Endothelial cell of umbilical vein (primary cell): ENCODE measurements at regions of chr1 and their contacts with region 1.

Region 1: GRCh38 chr1:23403735-23404486 is 20.6 kb downstream of the TCEA3 start:
- DNase-seq: peak; percentile 80
- H3K4me3 ChIP-seq: no peak overlapping the region
- H3K27ac ChIP-seq: peak overlapping the region; percentile 39
- H3K4me1 ChIP-seq: peaks cover 30% of the 10 kb centered on the region
- H3K27me3 ChIP-seq: no peaks in the 10 kb centered on the region
- CTCF ChIP-seq: peak; percentile 91 to 97
- POLR2A ChIP-seq: no peak

Region 2: DNA sequence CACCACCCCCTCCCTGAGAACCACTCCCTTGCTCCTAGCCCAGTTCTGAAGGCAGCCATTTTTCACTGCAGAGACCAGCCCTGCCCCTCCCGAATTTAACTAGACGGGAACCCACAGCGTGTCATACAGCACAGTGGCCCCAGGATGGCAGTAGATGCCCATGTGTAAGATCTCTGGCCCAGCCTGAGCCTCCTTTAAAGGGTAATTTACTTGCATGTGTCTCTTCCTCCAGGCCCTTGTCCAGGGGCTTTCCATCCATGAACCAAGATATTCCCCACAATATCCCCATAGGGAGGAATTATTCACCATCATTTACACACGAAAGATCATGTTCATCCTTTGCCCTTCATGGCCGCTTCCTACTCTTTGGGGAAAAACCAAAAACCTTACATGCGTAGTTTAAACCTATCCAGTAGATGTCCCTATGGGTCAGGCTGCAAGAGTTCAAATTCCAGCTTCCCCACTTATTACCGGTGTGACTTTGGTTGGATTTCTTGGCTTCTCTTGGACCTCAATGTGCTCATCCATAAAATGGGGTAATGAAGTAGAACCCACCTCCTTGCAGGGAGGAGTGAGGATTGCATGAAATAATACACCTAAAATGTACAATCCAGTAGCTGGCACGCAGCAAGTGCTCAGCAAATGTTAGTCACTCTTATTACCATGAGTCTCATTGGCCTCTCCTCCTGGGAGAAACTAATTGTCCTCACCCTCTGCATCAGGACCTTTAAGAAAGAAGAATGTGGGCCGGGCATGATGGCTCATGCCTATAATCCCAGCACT is 427.3 kb before region 1 on chr1:
- CTCF ChIA-PET with region 1: interaction called, 6 read pairs
- POLR2A ChIA-PET with region 1: no interaction called
- dilution Hi-C with region 1: no loop called
- intact Hi-C with region 1: loop called (anchors 1 kb)
- DNase-seq: peak; percentile 83
- H3K4me3 ChIP-seq: no peak overlapping the region
- H3K27ac ChIP-seq: no peak overlapping the region
- H3K4me1 ChIP-seq: peaks cover 12% of the 10 kb centered on the region
- H3K27me3 ChIP-seq: no peaks in the 10 kb centered on the region
- CTCF ChIP-seq: peak; percentile 81 to 87
- POLR2A ChIP-seq: no peak

Region 3: DNA sequence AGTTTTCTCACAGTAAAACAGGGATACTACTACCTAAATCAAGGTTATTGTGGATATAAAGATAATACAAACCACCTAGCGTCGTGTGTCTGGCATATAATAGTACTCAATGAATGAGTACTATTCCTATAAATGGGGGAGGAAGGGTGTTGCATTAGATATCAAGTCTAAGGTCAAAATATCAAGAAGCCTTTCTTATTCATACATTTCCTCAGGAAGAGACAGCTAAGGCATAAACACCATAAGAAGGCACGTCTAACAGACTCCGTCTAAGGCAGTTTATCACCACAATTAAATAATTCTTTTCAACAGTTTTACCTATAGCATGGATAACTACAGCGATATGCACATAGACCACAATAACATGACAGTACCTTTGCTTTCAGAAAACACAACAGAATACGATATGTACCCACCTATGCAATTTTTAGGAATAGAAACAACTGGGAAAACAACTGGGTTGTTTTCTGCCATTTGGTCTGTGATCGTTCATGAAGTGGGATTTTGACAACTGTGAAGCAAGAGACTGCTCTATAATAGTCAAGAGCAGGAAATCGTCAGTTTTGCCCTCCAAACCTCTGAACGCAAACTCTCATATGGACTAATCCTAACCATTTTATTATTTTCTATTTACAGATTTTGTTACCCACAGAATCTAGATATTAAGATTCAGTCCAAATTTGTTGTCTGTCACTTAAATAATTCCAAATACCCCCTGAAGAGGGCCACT is 112.9 kb before region 1 on chr1:
- CTCF ChIA-PET with region 1: interaction called, 5 read pairs
- POLR2A ChIA-PET with region 1: no interaction called
- dilution Hi-C with region 1: no loop called
- intact Hi-C with region 1: loop called (anchors 1 kb)
- DNase-seq: peak; percentile 89
- H3K4me3 ChIP-seq: peak overlapping the region in 1 of 3 experiments; percentile 4
- H3K27ac ChIP-seq: peak overlapping the region; percentile 92
- H3K4me1 ChIP-seq: peaks cover 55% of the 10 kb centered on the region
- H3K27me3 ChIP-seq: no peaks in the 10 kb centered on the region
- CTCF ChIP-seq: no peak
- POLR2A ChIP-seq: peak; percentile 69

Region 4: DNA sequence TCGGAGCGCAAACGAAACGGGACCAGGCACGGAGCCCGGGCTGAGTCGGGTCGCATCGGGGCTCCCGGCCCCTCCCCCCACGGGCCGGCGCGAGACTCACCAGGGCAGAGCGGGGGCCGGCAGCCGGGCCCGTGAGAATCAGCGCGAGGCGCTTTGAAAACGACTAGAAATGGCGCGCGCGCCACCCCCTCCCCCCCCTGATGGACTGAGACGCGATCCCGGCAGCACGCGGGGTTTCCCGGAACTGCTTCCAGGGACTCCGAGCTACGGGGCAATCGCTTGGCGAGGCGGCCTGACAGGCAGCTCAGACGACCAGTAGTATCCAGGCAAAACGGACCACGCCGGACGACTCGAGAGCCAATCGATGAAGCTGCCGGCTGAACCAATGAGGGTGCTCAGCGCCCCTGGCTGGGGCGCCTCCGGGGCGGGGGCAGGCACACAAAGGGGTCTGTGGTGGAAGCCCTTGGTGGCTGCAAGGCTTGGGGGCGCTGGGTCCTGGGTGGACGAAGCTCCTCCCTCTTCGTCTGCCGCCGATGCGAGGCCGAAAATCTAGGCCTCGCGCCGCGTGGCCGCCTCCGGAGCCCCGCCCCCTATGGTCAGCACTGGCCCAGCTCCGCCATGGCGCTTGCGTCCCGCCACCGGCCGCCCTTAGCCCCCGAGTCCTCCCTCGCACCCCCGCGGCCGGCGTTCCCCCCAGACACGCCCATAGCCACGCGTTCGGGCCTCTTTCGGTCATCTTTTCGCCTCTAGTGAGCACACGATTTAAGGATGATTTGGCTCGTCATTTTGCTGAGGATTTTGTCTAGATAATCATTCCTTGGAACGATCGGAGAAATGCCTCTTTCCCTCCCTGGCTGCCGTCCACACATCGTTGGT is 59.6 kb before region 1 on chr1 and contains the start of gene HNRNPR:
- CTCF ChIA-PET with region 1: interaction called, 33 read pairs
- POLR2A ChIA-PET with region 1: interaction called, 5 read pairs
- dilution Hi-C with region 1: no loop called
- intact Hi-C with region 1: loop called (anchors 1 kb)
- DNase-seq: peak; percentile 100
- H3K4me3 ChIP-seq: peak within 1 kb of the TSS; percentile 73 to 99 (median 99)
- H3K27ac ChIP-seq: peak within 1 kb of the TSS; percentile 79
- H3K4me1 ChIP-seq: peaks cover 27% of the 10 kb centered on the region
- H3K27me3 ChIP-seq: no peaks in the 10 kb centered on the region
- CTCF ChIP-seq: no peak
- POLR2A ChIP-seq: peak; percentile 87
- total RNA-seq, gene HNRNPR: 165 and 171 TPM in 2 replicates

Region 5: GRCh38 chr1:23367791-23368561 is 35.9 kb before region 1 on chr1:
- CTCF ChIA-PET with region 1: interaction called, 30 read pairs
- POLR2A ChIA-PET with region 1: no interaction called
- dilution Hi-C with region 1: no loop called
- intact Hi-C with region 1: loop called (anchors 1 kb)
- DNase-seq: peak; percentile 99
- H3K4me3 ChIP-seq: peak overlapping the region; percentile 47 to 93 (median 70)
- H3K27ac ChIP-seq: peak overlapping the region; percentile 82
- H3K4me1 ChIP-seq: peaks cover 32% of the 10 kb centered on the region
- H3K27me3 ChIP-seq: no peaks in the 10 kb centered on the region
- CTCF ChIP-seq: no peak
- POLR2A ChIP-seq: no peak

Region 6: DNA sequence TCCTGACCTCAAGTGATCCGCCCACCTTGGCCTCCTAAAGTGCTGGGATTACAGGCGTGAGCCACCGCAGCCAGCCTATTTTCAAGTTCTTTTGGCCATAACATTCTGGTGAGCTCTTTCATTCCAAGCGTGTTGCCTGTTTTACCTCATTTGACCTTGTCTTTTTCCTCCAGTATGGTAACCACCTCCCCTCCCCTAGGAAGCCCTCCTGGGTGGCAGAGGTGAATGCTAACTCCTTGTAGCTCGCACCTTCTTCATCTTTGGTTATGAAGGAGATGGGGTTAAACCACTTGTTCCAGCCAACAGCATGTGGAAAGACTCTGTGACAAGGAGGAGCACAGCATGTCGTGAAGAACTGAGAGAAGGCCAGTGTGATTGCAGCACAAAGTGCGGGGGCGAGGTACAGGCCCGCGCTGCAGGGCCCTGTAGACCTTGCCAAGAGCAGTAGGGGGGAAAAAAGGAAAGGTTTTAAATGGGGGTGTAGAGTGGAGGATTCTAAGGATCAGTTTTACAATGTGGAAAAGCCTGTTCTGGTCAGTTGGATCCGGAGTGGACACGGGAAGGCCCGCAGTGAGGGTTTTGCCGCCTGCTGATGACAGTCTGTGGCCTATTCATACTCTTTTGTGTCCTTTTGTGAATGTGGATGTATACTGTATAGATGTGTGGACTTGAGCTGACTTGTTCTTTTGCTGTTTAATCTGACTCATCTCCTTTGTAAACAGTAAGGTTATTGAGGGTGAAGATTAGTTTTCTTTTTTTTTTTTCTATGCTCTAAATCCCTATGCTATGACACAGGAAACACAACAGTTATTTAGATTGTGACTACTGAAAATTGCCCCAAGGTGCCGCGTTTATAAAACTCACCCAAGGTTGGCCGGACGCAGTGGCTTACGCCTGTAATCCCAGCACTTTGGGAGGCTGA is 26.8 kb before region 1 on chr1:
- CTCF ChIA-PET with region 1: interaction called, 10 read pairs
- POLR2A ChIA-PET with region 1: interaction called, 3 read pairs
- dilution Hi-C with region 1: no loop called
- intact Hi-C with region 1: no loop called
- DNase-seq: peak; percentile 67
- H3K4me3 ChIP-seq: no peak overlapping the region
- H3K27ac ChIP-seq: peak overlapping the region; percentile 42
- H3K4me1 ChIP-seq: peaks cover 10% of the 10 kb centered on the region
- H3K27me3 ChIP-seq: no peaks in the 10 kb centered on the region
- CTCF ChIP-seq: no peak
- POLR2A ChIP-seq: no peak

Region 7: GRCh38 chr1:23484253-23485001 is 80.5 kb after region 1 on chr1:
- CTCF ChIA-PET with region 1: interaction called, 8 read pairs
- POLR2A ChIA-PET with region 1: interaction called, 10 read pairs
- dilution Hi-C with region 1: no loop called
- intact Hi-C with region 1: no loop called
- DNase-seq: peak; percentile 92
- H3K4me3 ChIP-seq: peak overlapping the region; percentile 8 to 67 (median 34)
- H3K27ac ChIP-seq: no peak overlapping the region
- H3K4me1 ChIP-seq: peaks cover 11% of the 10 kb centered on the region
- H3K27me3 ChIP-seq: peaks cover 0 to 1% of the 10 kb centered on the region in 2 experiments
- CTCF ChIP-seq: no peak
- POLR2A ChIP-seq: no peak